ENCODE measurements at regions of chr4 and their contacts with region 1.

Region 1: DNA sequence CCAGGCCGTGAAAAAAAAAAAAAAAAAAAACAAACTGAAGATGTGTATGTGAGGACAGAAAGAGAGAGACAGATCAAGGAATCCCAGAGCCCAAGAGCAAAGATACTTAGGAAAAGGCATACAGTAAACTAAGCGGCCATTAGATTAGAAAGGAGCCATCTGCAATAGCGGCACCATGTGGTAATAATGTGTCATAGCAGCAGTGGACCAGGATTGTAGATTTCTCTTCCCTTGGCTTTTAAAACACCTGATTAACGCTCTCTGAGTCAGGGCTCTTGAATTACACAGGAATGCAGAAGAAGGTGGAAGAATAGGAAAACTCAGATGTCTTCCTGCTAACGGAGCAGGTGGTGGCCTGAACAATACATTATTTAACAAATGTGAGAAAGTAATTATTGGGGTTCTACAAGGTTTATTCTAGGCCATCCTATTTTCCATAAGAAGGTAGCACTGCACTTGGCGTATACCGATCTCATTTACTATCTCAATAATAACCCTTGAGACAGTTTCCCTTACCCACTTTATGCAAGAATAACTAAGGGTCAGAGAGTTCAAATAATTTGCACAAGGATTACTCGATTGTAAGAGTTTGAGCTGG is 182.7 kb downstream of the KCNIP4 start:
- DNase-seq: no peak
- H3K4me3 ChIP-seq: no peak overlapping the region
- H3K27ac ChIP-seq: no peak overlapping the region
- H3K4me1 ChIP-seq: no peaks in the 10 kb centered on the region
- H3K27me3 ChIP-seq: no peaks in the 10 kb centered on the region
- CTCF ChIP-seq: peak; percentile 88

Region 2: GRCh38 chr4:20666012-20666860 is 1099.7 kb before region 1 on chr4:
- intact Hi-C with region 1: no loop called
- DNase-seq: no peak
- H3K4me3 ChIP-seq: no peak overlapping the region
- H3K27ac ChIP-seq: no peak overlapping the region
- H3K4me1 ChIP-seq: no peaks in the 10 kb centered on the region
- H3K27me3 ChIP-seq: no peaks in the 10 kb centered on the region
- CTCF ChIP-seq: no peak

Region 3: GRCh38 chr4:21512353-21512752 is 253.6 kb before region 1 on chr4:
- intact Hi-C with region 1: loop called (anchors 5 kb)
- DNase-seq: no peak
- H3K4me3 ChIP-seq: no peak overlapping the region
- H3K27ac ChIP-seq: no peak overlapping the region
- H3K4me1 ChIP-seq: no peaks in the 10 kb centered on the region
- H3K27me3 ChIP-seq: no peaks in the 10 kb centered on the region
- CTCF ChIP-seq: peak; percentile 58

Region 4: DNA sequence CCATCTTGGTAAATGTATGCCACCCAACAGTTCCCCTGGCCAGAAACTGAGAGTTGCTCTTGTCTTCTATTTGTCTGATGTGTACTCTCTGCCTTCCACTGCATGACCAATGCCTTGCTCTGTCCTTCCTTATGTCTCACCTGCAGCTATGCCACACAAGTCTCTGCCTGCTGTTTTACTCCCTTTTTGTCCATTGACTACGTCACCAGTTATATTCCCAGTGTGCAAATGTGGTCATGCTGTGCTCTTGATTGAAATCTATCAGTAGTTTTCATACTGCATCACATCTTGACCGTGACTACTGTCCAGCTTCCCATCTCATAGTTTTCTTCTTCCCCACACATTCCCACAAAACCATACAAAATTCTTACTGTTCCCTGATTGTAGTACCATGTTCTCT is 171.8 kb after region 1 on chr4:
- intact Hi-C with region 1: no loop called
- DNase-seq: no peak
- H3K4me3 ChIP-seq: no peak overlapping the region
- H3K27ac ChIP-seq: no peak overlapping the region
- H3K4me1 ChIP-seq: no peaks in the 10 kb centered on the region
- H3K27me3 ChIP-seq: no peaks in the 10 kb centered on the region
- CTCF ChIP-seq: no peak